GM10248 (cell line): ENCODE measurements at regions of chr3 and their contacts with region 1.

Region 1: GRCh38 chr3:34260271-34261006 is 462.0 kb downstream of the PDCD6IP start:
- DNase-seq: peak; percentile 54
- CTCF ChIP-seq: peak; percentile 72

Region 2: GRCh38 chr3:33482111-33482521 is 778.3 kb before region 1 on chr3:
- CTCF ChIA-PET with region 1: no interaction called
- POLR2A ChIA-PET with region 1: no interaction called
- DNase-seq: no peak
- CTCF ChIP-seq: no peak

Region 3: DNA sequence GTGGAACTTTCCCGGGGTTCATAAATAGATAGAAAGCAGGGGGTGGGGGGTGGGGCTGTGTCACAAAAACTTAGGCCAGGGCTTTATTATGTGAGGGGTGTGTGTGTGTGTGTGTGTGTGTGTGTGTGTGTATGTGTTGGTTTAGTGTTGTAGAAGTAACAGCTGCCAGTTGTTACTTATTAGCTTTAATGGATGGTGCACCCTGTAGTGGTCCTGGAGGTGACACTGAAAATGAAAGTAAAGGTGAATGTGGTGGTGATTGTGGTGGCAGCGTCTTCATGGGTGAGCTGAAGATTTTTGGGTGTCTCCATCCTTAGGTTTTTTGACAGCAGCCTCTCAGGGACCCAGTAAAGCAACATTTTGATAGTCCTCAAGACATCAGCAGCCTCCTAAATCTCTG is 12.1 kb before region 1 on chr3:
- CTCF ChIA-PET with region 1: interaction called, 38 read pairs
- POLR2A ChIA-PET with region 1: no interaction called
- DNase-seq: peak; percentile 22
- CTCF ChIP-seq: no peak

Region 4: DNA sequence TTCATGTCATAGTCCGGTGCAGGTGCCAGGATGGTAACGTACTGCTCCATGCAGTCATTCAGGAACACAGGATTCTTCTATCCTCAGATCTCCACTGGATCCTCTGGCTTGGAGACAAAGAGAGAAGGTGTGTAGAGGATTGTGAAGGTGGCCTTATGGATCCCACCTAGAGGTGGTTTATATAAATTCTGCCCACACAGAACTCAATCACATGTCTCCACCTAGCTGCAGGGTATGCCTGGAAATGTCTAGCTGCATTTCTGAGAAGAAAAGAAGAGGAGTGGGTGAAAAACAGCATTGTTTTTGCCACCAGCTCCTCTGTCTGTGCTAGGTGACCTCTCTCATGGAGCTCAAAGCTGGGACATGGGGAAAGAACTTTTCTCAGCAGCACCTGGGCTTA is 16.7 kb after region 1 on chr3:
- CTCF ChIA-PET with region 1: interaction called, 22 read pairs
- POLR2A ChIA-PET with region 1: no interaction called
- DNase-seq: no peak
- CTCF ChIP-seq: peak; percentile 20

Region 5: GRCh38 chr3:34283751-34284150 is 23.3 kb after region 1 on chr3:
- CTCF ChIA-PET with region 1: interaction called, 22 read pairs
- POLR2A ChIA-PET with region 1: no interaction called
- DNase-seq: no peak
- CTCF ChIP-seq: no peak